AG04450 (cell line): ENCODE measurements at regions of chr16 and their contacts with region 1.

Region 1: GRCh38 chr16:58129097-58129936 is at the start of gene CFAP20:
- DNase-seq: peak; percentile 100
- H3K4me3 ChIP-seq: peak within 1 kb of the TSS; percentile 91
- H3K27ac ChIP-seq: peak within 1 kb of the TSS; percentile 93
- H3K27me3 ChIP-seq: no peaks in the 10 kb centered on the region
- CTCF ChIP-seq: no peak
- polyA plus RNA-seq, gene CFAP20: 35.7 and 36.3 TPM in 2 replicates

Region 2: DNA sequence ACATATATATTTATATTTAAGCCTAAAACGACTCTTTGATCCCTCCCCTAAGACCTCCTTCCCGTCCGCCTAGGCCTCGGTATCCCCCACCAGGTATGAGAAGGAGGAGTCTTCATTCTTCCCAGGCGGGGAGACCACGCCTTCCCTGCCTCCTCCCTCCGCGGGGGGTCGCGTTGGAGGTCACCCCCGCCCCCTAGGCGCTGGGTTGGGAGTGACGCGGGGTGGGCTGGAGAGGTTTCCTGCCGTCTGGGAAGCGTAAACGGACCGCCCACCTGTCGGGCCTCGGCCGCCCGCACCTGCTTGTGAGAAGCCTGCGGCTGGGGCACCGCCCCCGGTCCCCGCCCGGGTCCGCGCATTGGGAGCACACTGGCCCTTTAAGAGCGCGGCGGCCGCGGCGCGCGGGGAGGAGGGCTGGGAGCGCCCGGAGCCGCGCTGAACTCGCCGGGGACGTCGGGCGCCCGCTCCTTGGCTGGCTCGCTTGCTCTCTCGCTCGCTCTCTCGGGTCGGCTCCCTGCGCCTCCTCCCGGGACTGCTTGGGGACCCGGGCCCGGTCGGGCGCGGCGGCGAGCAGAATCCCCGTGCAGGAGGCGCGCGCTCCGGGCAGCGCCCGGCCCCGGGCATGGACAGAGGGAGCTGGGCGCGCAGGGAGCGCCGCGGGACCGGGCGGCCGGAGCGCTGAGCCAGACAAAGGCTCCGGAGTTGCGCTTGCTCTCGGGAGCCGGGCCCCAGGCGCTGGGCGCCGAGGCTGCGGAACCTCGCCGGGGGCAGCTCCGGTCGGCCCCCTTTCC is 103.8 kb before region 1 on chr16 and contains the start of gene MMP15:
- CTCF ChIA-PET with region 1: interaction called, 4 read pairs
- POLR2A ChIA-PET with region 1: interaction called, 12 read pairs
- DNase-seq: no peak
- H3K4me3 ChIP-seq: peak within 1 kb of the TSS; percentile 59
- H3K27ac ChIP-seq: no peak within 1 kb of the TSS
- H3K27me3 ChIP-seq: peaks cover 42% of the 10 kb centered on the region
- CTCF ChIP-seq: no peak
- polyA plus RNA-seq, gene MMP15: 0.60 and 0.88 TPM in 2 replicates